Head of caudate nucleus (tissue), 42 donors: ENCODE measurements at regions of chr5 and their contacts with region 1.

Region 1: GRCh38 chr5:41843456-41844370 is 26.5 kb downstream of the OXCT1 start:
- DNase-seq: peak in 26 of 42 donors; percentile 10 to 70 (median 40)

Region 2: DNA sequence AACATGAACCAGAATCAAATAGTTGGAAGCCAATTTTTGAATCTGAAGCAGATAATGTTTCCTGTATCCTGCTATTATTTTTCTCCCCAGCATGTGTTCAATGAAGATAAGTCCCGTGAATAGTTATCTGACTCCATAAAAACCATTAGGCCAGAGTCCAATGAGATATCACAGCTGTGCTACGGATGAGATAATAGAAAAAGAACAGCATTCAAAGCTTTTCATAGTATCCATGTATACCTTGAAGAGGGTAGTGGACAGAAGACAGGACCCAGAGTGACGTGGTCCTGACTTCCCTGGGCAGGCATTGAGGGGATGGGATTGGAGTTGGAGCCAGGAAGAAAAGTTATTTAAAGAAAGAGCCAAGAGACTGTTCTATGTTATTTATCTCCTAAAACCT is 579.7 kb before region 1 on chr5:
- intact Hi-C with region 1: loop called (anchors 10 kb)
- DNase-seq: no peak

Region 3: GRCh38 chr5:41770799-41771198 is 72.9 kb before region 1 on chr5:
- intact Hi-C with region 1: no loop called
- DNase-seq: no peak

Region 4: GRCh38 chr5:42300496-42300895 is 456.8 kb after region 1 on chr5:
- intact Hi-C with region 1: no loop called
- DNase-seq: no peak